Activated CD8-positive, alpha-beta T cell treated with anti-CD3 and anti-CD28 coated beads for 36 hours (primary cell): ENCODE measurements at regions of chr1 and their contacts with region 1.

Region 1: DNA sequence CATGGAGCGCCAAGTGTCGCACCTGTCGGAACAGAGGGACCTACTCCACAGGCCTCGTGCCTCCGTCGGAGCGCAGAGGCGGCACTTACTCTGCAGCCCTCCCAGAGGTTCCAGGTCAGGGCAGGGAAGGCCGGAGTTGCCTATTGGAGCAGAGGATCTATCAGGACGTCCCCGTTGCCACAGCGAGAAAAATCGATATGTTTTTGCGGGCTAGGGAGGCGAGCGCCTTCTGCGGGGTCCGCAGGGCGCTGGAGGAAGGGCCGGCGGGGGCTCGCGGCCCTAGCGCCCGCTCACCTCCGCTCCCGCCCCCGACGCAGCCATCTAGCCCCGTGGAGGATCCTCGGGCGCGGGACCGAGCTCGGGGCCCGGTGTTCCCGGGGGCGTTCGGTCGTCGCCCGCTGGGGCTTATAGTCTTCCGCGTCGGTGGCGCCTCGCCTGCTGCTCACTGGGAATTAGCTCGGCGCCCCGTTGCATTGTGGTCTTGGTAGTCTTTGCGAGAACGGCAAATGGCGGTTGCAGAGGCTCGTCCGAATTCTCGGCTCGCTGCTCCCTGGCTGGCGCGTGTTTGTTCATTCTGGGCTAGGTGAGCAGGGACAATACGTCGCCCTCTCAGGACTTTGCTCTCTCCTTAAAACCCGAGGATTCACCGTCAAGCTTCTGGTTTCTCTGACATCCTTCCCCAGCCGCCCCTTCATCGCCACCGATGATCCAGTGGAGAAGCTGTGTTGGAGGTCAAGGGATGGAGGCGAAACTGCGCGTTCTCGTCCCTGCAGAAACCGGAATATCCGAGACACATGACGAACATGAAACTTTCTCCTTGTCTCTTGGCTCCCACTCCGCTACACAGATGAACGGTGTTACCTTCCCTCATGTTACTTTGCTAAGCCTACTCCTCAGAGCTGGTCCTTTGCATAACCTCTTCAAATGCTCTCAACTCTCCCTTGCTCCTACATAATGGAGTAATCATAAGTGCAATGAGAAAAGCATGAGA is at the start of gene JTB:
- DNase-seq: peak; percentile 94
- ATAC-seq: peak; percentile 96
- H3K4me3 Mint-ChIP-seq: peak within 1 kb of the TSS; percentile 99
- H3K27ac Mint-ChIP-seq: peak within 1 kb of the TSS; percentile 98
- H3K4me1 Mint-ChIP-seq: peaks cover 28% of the 10 kb centered on the region
- H3K27me3 Mint-ChIP-seq: no peaks in the 10 kb centered on the region
- CTCF ChIP-seq: no peak
- total RNA-seq, gene JTB: 151 to 153 TPM

Region 2: DNA sequence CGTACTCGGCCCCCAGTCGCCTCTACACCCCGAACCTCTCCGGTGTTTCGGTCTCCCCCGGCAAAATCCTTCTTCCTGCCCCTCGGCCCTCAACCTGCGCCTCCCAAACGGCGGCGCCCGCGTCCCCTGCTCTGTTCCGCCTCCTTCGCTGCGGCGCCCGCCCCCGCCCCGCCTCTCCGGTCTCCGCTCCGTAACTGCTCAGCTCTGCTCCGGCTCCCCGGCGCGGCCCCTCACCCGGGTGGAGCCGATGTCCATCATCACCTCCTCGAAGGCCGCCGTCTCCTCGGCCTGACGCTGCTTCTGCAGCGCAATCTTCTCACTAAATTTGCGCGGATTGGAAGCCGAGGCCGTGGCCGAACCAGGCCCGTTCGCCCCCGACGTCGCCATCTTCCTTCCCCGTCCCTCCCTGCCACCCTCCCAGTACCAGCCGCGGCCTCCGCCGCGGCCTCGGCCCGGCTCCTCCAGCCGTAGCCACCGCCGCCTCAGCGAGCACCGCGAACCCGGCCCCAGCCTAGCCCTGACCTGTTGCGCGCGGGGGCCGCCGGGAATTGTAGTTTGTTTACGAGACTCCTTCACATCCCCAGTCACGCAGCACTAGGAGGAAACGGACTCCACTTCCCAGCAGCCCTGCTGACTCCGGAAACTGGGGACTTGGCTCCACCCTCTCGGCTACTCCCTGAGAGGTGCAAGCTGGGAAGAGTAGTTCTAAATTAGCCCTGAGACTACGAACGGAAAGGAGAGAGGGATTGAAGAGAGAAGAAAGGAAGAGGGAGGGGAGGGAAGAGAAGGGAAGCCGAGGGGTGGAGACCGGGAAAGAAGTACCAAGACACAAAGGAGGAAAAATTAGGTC is 19.2 kb before region 1 on chr1 and contains the start of gene CRTC2:
- CTCF ChIA-PET with region 1: interaction called, 4 read pairs
- POLR2A ChIA-PET with region 1: interaction called, 138 read pairs
- intact Hi-C with region 1: no loop called
- DNase-seq: peak; percentile 100
- ATAC-seq: peak; percentile 88
- H3K4me3 Mint-ChIP-seq: peak within 1 kb of the TSS; percentile 97
- H3K27ac Mint-ChIP-seq: peak within 1 kb of the TSS; percentile 98
- H3K4me1 Mint-ChIP-seq: peaks cover 59% of the 10 kb centered on the region
- H3K27me3 Mint-ChIP-seq: no peaks in the 10 kb centered on the region
- CTCF ChIP-seq: no peak
- total RNA-seq, gene CRTC2: 67.3 to 71.8 TPM

Region 3: DNA sequence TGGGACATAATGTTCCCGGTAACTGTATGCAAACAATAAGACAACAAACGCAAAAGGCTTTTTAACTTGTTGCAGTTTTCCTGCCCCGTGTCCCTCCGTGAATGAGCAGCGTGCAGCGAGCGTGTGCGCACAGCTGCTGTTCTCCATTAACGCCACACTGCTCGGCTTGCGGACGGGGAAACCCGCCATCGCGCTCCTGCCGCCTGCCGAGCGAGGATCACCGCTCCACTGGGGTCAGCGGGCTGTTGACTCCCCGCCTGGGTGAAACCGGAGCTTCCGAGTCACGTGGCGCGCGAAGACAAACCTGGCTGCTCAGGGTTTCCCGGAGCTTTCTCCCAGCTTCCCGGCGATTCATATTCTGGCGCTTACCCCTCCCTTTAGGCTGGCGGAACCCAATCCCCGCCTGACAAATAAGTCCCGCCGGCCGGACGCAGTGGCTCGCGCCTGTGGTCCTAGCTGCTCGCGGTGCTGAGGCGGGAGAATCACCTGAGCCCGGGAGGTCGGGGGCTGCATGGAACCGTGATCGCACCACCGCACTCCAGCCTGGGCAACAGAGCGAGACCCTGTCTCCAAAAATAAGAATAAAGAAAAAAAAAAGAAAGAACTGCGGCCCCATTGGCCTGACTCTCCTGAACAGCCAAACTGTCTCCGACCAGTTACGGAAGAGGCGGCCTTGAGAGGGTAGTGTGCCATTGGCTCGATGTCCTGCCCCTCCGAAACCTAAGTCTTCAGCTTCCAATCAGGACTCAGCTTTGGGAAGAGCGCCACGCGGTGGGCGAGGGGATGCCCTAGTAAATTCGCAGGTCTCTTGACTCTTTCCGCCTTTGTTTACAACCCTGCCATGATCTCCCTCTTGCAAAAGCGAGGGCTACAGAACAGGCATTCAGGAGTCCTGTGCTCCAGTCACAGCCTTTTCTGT is 10.2 kb before region 1 on chr1 and contains the start of gene CREB3L4:
- CTCF ChIA-PET with region 1: interaction called, 35 read pairs
- POLR2A ChIA-PET with region 1: interaction called, 138 read pairs
- intact Hi-C with region 1: no loop called
- DNase-seq: peak; percentile 94
- ATAC-seq: peak; percentile 88
- H3K4me3 Mint-ChIP-seq: peak within 1 kb of the TSS; percentile 99
- H3K27ac Mint-ChIP-seq: peak within 1 kb of the TSS; percentile 94
- H3K4me1 Mint-ChIP-seq: peaks cover 32% of the 10 kb centered on the region
- H3K27me3 Mint-ChIP-seq: no peaks in the 10 kb centered on the region
- CTCF ChIP-seq: peak; percentile 18
- total RNA-seq, gene CREB3L4: 8.3 to 8.8 TPM

Region 4: DNA sequence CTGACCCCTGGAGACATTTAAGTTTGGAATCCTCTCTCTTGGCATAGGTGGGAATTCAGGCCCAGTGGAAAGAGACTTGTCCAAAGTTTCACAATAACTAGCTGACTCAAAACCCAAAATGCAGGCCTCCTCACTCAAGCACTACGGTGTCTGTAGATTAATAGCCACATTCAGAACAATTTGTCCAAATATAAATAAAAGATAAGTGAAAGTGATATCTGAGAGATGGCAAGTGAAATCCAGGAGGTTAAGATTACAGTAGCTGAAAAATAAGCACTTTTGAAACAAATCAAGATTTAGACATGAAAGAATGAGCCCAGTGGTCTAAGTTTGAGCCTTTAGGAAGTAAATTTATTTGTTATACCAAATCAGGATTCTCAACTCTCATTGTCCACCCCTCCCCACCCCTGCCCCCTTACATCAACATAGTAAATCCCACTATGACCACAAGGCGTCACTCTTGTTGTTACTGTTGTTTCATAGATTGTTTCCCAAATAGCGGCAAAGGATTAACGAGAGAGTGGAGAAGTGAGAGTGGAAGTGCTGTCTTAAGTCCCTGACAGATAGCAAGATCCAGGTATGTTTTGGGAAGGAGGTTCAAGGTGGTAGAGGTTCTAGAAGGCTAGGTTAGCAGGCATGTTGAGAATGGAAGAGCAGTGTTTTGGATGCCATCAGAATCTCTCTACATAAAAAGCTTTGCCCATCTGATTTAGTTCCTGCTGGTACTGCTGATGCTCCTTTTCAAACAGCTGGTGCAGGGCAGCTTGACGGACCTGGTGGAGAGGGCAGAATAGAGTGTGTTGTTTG is 221.4 kb after region 1 on chr1:
- CTCF ChIA-PET with region 1: no interaction called
- POLR2A ChIA-PET with region 1: no interaction called
- intact Hi-C with region 1: no loop called
- DNase-seq: peak; percentile 65
- ATAC-seq: peak; percentile 82
- H3K4me3 Mint-ChIP-seq: no peak overlapping the region
- H3K27ac Mint-ChIP-seq: no peak overlapping the region
- H3K4me1 Mint-ChIP-seq: no peaks in the 10 kb centered on the region
- H3K27me3 Mint-ChIP-seq: peaks cover 3% of the 10 kb centered on the region
- CTCF ChIP-seq: peak; percentile 69